Right ventricle myocardium superior (tissue), 1 donor: ENCODE measurements at regions of chr17 and their contacts with region 1.

Region 1: DNA sequence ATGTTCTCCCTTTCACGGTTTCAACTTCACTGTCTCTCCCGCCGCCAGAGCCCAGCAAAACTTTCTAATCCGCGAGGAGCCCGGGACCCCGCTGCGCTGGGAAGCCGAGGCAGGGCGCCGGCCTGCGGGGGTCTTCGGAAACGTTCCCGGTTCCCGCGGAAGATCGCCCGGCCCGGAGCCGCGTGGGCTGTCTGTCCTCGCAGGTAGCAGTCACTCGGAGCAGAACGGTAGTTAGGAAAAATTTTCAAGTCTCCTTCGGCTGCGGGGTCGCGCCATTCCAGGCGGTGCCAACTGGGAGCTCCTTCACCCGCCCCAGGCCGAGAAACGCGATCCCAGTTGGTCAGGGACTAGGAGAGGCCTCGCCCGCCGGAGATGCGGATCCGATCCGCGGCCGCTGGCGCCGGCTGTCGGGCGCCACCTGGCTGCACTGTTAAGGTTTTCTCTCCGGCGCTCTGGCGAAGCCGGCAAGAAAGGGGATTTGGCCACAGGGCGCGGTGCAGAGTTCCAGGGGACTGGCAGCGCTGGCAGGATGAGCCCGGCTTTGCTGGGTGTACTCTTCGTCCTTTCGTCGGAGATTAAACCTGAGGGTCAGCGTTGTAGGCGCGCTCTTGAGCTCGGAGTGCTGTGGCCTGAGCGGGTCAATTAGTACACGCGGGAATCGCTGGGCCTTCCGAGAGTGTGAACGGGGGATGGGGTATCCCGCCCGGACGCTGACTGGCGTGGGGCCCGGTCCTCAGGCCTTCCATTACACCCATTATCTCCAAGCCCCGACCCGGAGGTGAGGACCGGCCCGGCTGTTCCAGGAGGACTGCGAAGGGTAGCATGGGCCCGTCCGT is 135.4 kb downstream of the KCNJ12 start:
- DNase-seq: peak; percentile 91
- ATAC-seq: peak; percentile 99

Region 2: GRCh38 chr17:21457051-21458026 is 54.2 kb before region 1 on chr17:
- intact Hi-C with region 1: loop called (anchors 1 kb)
- DNase-seq: peak; percentile 94
- ATAC-seq: peak; percentile 97